ENCODE measurements at regions of chr1 and their contacts with region 1.

Region 1: DNA sequence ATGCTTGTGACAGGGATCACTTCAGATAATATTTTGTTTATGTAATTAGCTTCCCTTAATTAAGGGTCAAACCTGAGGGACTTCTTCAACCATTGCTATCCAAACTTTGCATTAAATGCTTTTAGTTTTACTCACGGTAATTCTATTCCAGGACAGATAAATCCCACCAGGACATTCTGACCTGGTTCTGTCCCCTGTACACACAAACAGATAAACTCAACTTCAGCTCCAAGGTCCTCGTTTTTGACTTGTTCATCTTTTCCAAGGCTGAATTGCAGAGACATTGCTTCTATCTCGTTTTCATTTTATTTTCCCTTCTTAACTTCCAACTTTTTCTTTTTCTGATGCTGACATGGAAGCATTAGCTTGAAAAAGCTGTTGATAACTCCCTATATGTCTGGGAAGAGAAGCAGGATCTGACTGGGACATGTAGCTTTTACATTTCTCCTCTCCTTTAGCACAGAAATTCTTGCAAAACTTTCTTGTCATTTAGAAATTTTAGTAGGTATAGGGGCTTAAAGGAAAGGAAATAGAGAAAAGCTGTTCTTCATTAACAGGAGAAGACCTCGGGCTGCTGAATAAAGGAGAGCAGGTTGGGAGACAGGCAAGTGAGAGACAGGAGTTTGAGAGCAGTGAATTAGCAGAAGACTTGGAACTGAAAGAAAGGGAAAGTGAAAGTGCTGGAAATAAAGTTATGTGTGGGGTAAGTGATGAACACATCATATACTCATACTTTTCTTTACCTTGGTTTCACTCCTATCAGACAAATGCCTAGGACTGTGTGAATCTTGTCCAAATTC is 231.7 kb upstream of the B3GALT2 start:
- DNase-seq: peak; percentile 51
- ATAC-seq: peak; percentile 54
- H3K4me3 ChIP-seq: peak overlapping the region; percentile 33 to 66 (median 51)
- H3K4me3 Mint-ChIP-seq: peak overlapping the region; percentile 77
- H3K27ac ChIP-seq: peak overlapping the region; percentile 11 to 14
- H3K27ac Mint-ChIP-seq: peak overlapping the region; percentile 12
- H3K4me1 ChIP-seq: peaks cover 12 to 19% of the 10 kb centered on the region in 2 donors
- H3K4me1 Mint-ChIP-seq: peaks cover 23% of the 10 kb centered on the region
- H3K27me3 ChIP-seq: no peaks in the 10 kb centered on the region
- H3K27me3 Mint-ChIP-seq: no peaks in the 10 kb centered on the region
- CTCF ChIP-seq: no peak

Region 2: DNA sequence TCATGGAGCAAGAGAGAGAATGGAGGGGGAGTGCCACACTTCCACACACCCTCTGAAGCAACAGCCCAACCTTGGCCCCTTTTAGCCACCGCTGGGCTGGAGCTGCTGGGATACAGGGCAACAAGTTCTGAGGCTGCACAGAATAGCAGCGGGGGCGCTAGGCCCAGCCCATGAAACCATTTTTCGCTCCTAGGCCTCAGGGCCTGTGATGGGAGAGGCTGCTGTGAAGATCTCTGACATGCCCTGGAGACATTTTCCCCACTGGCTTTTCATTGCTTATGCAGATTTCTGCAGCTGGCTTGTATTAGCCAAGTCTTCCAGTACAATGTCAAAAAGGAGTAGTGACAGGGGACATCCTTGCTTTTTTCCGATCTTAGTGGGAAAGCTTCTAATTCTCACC is 29.5 kb before region 1 on chr1:
- CTCF ChIA-PET with region 1: no interaction called
- POLR2A ChIA-PET with region 1: no interaction called
- intact Hi-C with region 1: no loop called
- DNase-seq: no peak
- ATAC-seq: no peak
- H3K4me3 ChIP-seq: no peak overlapping the region
- H3K4me3 Mint-ChIP-seq: no peak overlapping the region
- H3K27ac ChIP-seq: no peak overlapping the region
- H3K27ac Mint-ChIP-seq: no peak overlapping the region
- H3K4me1 ChIP-seq: no peaks in the 10 kb centered on the region
- H3K4me1 Mint-ChIP-seq: no peaks in the 10 kb centered on the region
- H3K27me3 ChIP-seq: no peaks in the 10 kb centered on the region
- H3K27me3 Mint-ChIP-seq: peaks cover 3% of the 10 kb centered on the region
- CTCF ChIP-seq: no peak

Region 3: DNA sequence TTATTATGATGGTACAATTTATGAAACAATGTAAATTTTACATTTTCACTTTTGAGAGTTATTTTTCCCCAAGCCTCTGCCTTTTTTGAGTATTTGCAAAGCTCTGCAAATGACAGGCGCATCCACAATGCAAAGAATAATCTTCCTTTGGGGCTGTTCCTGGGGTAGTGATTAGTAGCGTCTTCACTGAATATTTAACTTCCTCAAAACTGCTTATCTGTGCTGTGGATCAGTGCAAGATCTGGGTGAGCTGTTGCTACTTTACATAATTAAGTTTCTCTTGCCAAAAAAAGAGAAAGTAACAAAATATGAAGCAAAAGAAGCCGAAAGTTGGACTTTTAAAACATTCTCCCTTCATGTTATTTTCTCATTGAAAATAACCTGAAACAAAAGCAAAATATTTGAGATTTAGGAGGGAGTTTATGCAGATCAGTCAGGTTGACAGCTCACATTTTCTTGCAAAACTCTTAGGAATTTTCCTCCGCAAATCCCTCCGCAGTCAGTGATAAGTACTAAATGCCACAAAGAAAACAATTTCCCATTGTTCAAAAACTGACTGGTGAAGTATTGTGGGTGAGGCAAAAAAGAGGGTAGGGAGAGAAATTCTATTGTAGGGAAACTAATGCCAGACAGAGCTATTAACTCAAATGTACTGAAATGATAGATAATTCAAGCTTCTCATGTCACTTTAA is 44.6 kb after region 1 on chr1:
- CTCF ChIA-PET with region 1: no interaction called
- POLR2A ChIA-PET with region 1: no interaction called
- intact Hi-C with region 1: loop called (anchors 5 kb)
- DNase-seq: peak; percentile 37
- ATAC-seq: peak; percentile 66
- H3K4me3 ChIP-seq: peak overlapping the region in 2 of 5 experiments; percentile 16 to 31
- H3K4me3 Mint-ChIP-seq: peak overlapping the region; percentile 59
- H3K27ac ChIP-seq: no peak overlapping the region
- H3K27ac Mint-ChIP-seq: no peak overlapping the region
- H3K4me1 ChIP-seq: peaks cover 9 to 10% of the 10 kb centered on the region in 2 donors
- H3K4me1 Mint-ChIP-seq: peaks cover 15% of the 10 kb centered on the region
- H3K27me3 ChIP-seq: no peaks in the 10 kb centered on the region
- H3K27me3 Mint-ChIP-seq: no peaks in the 10 kb centered on the region
- CTCF ChIP-seq: no peak

Region 4: GRCh38 chr1:193479187-193479586 is 61.0 kb after region 1 on chr1:
- CTCF ChIA-PET with region 1: no interaction called
- POLR2A ChIA-PET with region 1: no interaction called
- intact Hi-C with region 1: loop called (anchors 5 kb)
- DNase-seq: peak; percentile 89
- ATAC-seq: peak; percentile 95
- H3K4me3 ChIP-seq: peak overlapping the region in 2 of 5 experiments; percentile 1 to 4
- H3K4me3 Mint-ChIP-seq: peak overlapping the region; percentile 71
- H3K27ac ChIP-seq: peak overlapping the region; percentile 59 to 68
- H3K27ac Mint-ChIP-seq: peak overlapping the region; percentile 84
- H3K4me1 ChIP-seq: peaks cover 15 to 39% of the 10 kb centered on the region in 2 donors
- H3K4me1 Mint-ChIP-seq: peaks cover 36% of the 10 kb centered on the region
- H3K27me3 ChIP-seq: no peaks in the 10 kb centered on the region
- H3K27me3 Mint-ChIP-seq: no peaks in the 10 kb centered on the region
- CTCF ChIP-seq: no peak

Region 5: DNA sequence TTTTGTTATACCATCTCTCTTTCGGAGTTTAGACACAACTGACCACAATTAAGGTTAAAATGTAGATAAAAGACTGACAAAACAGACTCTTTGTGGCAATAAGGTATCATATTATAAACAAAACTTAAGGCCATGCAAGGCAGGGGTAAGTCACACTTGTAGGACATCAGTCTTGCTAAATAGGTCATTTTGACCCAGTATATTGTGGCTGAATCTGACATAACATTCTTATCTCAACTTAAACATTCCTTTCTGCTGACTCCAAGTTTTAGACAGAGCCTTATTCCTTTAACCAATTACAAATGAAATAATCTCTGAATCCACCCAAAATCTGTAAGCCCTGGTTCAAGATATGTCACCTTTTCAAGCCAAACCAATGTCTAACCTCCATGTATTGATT is 501.7 kb after region 1 on chr1:
- CTCF ChIA-PET with region 1: no interaction called
- POLR2A ChIA-PET with region 1: no interaction called
- intact Hi-C with region 1: no loop called
- DNase-seq: no peak
- ATAC-seq: no peak
- H3K4me3 ChIP-seq: no peak overlapping the region
- H3K4me3 Mint-ChIP-seq: no peak overlapping the region
- H3K27ac ChIP-seq: no peak overlapping the region
- H3K27ac Mint-ChIP-seq: no peak overlapping the region
- H3K4me1 ChIP-seq: no peaks in the 10 kb centered on the region
- H3K4me1 Mint-ChIP-seq: no peaks in the 10 kb centered on the region
- H3K27me3 ChIP-seq: no peaks in the 10 kb centered on the region
- H3K27me3 Mint-ChIP-seq: no peaks in the 10 kb centered on the region
- CTCF ChIP-seq: no peak

Measured in B cell (primary cell).